Breast epithelium (tissue), 4 donors: ENCODE measurements at regions of chr18 and their contacts with region 1.

Region 1: GRCh38 chr18:73147591-73147990 is 279.8 kb upstream of the NETO1 start:
- DNase-seq: no peak
- H3K4me3 ChIP-seq: no peak overlapping the region
- H3K27ac ChIP-seq: no peak overlapping the region
- H3K4me1 ChIP-seq: no peaks in the 10 kb centered on the region
- H3K27me3 ChIP-seq: no peaks in the 10 kb centered on the region
- CTCF ChIP-seq: no peak
- POLR2A ChIP-seq: no peak

Region 2: GRCh38 chr18:73168236-73168635 is 20.6 kb after region 1 on chr18:
- intact Hi-C with region 1: loop called (anchors 2 kb)
- DNase-seq: no peak
- H3K4me3 ChIP-seq: no peak overlapping the region
- H3K27ac ChIP-seq: no peak overlapping the region
- H3K4me1 ChIP-seq: no peaks in the 10 kb centered on the region
- H3K27me3 ChIP-seq: no peaks in the 10 kb centered on the region
- CTCF ChIP-seq: no peak
- POLR2A ChIP-seq: no peak